IMR-90 (cell line): ENCODE measurements at regions of chr2 and their contacts with region 1.

Region 1: DNA sequence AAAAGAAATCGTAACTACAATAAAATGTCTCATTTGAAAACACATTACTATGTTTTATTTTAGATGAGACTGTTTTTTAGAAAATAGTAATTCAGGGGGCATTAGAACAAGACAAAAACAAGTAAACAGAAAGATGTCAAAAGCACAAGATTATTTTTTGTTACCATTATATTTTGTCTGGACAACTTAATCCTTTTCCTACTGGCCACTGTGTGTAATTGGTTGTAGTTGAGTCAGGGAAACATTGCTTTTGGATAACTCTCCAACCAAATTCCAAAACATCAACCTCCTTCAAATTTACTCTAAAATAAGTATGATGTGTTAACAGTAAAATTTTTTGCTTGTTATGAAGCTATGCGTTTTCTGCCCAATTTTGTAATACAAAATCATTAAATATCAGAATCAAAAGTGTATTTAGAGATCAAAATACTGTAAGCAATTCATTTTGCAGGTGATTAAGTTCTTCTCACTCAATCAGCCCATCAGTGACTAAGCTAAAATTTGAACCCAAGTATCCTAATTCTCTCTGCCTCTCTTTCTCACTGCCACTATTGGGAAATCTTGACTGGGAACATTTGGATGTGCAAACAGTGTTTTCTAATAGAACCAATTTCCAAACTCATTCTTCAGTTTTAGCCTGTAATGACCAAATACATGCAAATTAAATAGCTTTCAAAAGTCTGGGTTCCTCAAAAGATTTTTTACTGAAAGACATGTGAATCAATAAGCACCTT is 11.4 kb upstream of the MEIS1 start:
- DNase-seq: no peak
- ATAC-seq: no peak
- H3K4me3 ChIP-seq: no peak overlapping the region
- H3K27ac ChIP-seq: no peak overlapping the region
- H3K4me1 ChIP-seq: no peaks in the 10 kb centered on the region
- H3K27me3 ChIP-seq: peaks cover 6% of the 10 kb centered on the region
- CTCF ChIP-seq: no peak
- POLR2A ChIP-seq: no peak
- RAD21 ChIP-seq: no peak

Region 2: DNA sequence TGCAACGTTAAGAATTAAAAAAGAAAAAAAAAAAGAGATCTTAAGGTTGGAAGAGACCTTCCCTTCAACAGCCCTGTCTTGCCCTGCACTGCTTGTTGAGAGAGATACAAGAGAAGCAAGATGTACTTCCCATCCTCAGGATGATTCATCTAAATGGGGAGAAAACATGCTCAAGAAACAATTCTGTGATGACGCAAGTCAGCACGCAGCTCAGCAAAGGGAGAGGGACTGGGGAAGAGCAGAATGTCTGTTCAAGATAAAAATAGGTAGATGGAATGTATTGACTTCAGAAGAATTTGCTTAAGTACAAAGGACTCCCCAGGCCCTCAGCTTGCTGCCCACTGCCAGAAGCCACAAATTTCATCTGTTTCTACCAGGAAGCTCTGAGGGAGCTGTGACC is 792.9 kb before region 1 on chr2:
- CTCF ChIA-PET with region 1: no interaction called
- POLR2A ChIA-PET with region 1: no interaction called
- dilution Hi-C with region 1: no loop called
- in situ Hi-C with region 1: loop called (anchors 25 kb)
- intact Hi-C with region 1: no loop called
- DNase-seq: peak; percentile 77
- ATAC-seq: peak; percentile 83
- H3K4me3 ChIP-seq: no peak overlapping the region
- H3K27ac ChIP-seq: no peak overlapping the region
- H3K4me1 ChIP-seq: no peaks in the 10 kb centered on the region
- H3K27me3 ChIP-seq: peaks cover 11% of the 10 kb centered on the region
- CTCF ChIP-seq: no peak
- POLR2A ChIP-seq: no peak
- RAD21 ChIP-seq: no peak

Region 3: DNA sequence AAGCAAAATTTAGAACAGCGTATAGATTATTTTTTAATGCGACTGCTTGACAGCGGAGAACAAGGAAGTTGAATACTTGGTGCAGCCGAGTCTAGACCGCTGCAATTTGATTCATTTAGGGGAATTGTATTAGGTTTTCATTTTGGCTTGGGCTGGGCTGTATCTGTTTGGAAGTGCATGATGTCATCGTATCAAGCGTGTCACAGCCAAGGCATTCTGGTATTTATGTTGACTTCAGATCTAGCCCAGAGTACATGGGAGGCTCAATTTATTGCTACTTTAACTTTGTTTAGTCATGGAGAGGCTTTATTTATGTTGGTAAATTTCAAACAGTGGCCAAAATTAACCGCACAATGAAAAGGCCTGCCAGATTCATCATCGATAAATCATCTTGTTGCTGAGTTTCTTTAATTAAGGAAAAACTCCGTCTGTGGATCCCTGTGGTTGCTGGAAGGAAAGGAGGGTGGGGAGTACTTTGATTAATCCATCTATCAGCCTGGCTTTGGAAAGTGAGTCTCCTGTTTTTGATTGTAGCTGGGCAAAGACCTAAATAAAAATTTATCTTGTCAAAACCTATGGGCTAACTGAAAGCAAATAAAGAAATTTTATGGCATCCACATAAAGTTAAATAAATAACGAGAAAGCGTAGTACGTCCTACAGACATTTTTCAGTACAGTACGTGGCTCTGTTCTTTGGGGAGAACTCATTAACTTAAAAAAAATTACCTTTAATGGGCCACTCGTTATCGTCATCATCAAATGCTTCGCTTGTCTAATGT is 760.7 kb before region 1 on chr2:
- CTCF ChIA-PET with region 1: no interaction called
- POLR2A ChIA-PET with region 1: no interaction called
- dilution Hi-C with region 1: no loop called
- in situ Hi-C with region 1: no loop called
- intact Hi-C with region 1: loop called (anchors 5 kb)
- DNase-seq: peak; percentile 93
- ATAC-seq: peak; percentile 91
- H3K4me3 ChIP-seq: no peak overlapping the region
- H3K27ac ChIP-seq: no peak overlapping the region
- H3K4me1 ChIP-seq: peaks cover 20% of the 10 kb centered on the region
- H3K27me3 ChIP-seq: peaks cover 4% of the 10 kb centered on the region
- CTCF ChIP-seq: no peak
- POLR2A ChIP-seq: no peak
- RAD21 ChIP-seq: no peak

Region 4: DNA sequence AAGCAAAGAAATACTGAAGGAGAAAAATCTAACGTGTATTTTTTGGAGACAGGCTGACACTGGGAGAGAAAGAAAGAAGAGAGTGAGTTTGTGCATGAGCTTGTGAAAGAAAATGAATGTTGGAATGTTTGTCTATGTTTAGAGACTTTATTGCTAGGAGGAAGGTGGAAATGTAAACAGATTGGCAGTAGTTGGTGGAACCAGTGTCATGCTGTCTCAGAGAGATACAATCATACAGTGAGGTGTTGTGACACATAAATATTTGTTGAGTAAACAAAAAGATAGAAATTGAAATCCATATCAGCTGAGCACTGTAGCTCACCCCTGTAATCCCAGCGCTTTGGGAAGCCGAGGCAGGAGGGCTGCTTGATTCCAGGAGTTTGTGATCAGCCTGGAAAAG is 210.8 kb before region 1 on chr2:
- CTCF ChIA-PET with region 1: no interaction called
- POLR2A ChIA-PET with region 1: no interaction called
- dilution Hi-C with region 1: no loop called
- in situ Hi-C with region 1: no loop called
- intact Hi-C with region 1: loop called (anchors 1 kb)
- DNase-seq: no peak
- ATAC-seq: no peak
- H3K4me3 ChIP-seq: no peak overlapping the region
- H3K27ac ChIP-seq: no peak overlapping the region
- H3K4me1 ChIP-seq: no peaks in the 10 kb centered on the region
- H3K27me3 ChIP-seq: no peaks in the 10 kb centered on the region
- CTCF ChIP-seq: no peak
- POLR2A ChIP-seq: no peak
- RAD21 ChIP-seq: no peak

Region 5: GRCh38 chr2:66461664-66462500 is 38.3 kb after region 1 on chr2:
- CTCF ChIA-PET with region 1: no interaction called
- POLR2A ChIA-PET with region 1: no interaction called
- dilution Hi-C with region 1: no loop called
- in situ Hi-C with region 1: no loop called
- intact Hi-C with region 1: no loop called
- DNase-seq: no peak
- ATAC-seq: no peak
- H3K4me3 ChIP-seq: no peak overlapping the region
- H3K27ac ChIP-seq: peak overlapping the region; percentile 53; the same call in 1 of the 2 replicates
- H3K4me1 ChIP-seq: peaks cover 29% of the 10 kb centered on the region
- H3K27me3 ChIP-seq: no peaks in the 10 kb centered on the region
- CTCF ChIP-seq: no peak
- POLR2A ChIP-seq: no peak
- RAD21 ChIP-seq: no peak

Region 6: GRCh38 chr2:66915237-66915636 is 491.7 kb after region 1 on chr2:
- CTCF ChIA-PET with region 1: no interaction called
- POLR2A ChIA-PET with region 1: no interaction called
- dilution Hi-C with region 1: no loop called
- in situ Hi-C with region 1: no loop called
- intact Hi-C with region 1: no loop called
- DNase-seq: peak; percentile 20
- ATAC-seq: peak; percentile 60
- H3K4me3 ChIP-seq: no peak overlapping the region
- H3K27ac ChIP-seq: no peak overlapping the region
- H3K4me1 ChIP-seq: peaks cover 6% of the 10 kb centered on the region
- H3K27me3 ChIP-seq: no peaks in the 10 kb centered on the region
- CTCF ChIP-seq: no peak
- POLR2A ChIP-seq: no peak
- RAD21 ChIP-seq: no peak